Activated naive CD4-positive, alpha-beta T cell treated with anti-CD3 and anti-CD28 coated beads for 36 hours (primary cell): ENCODE measurements at regions of chrX and their contacts with region 1.

Region 1: GRCh38 chrX:153794018-153794896 is at the starts of genes IDH3G and SSR4:
- DNase-seq: peak; percentile 94
- H3K4me3 Mint-ChIP-seq: peak within 1 kb of the TSS; percentile 94
- H3K27ac Mint-ChIP-seq: peak within 1 kb of the TSS; percentile 87
- H3K4me1 Mint-ChIP-seq: peaks cover 29% of the 10 kb centered on the region
- H3K27me3 Mint-ChIP-seq: no peaks in the 10 kb centered on the region
- total RNA-seq, gene IDH3G: 46.3 to 49.9 TPM
- total RNA-seq, gene SSR4: 148 to 152 TPM

Region 2: DNA sequence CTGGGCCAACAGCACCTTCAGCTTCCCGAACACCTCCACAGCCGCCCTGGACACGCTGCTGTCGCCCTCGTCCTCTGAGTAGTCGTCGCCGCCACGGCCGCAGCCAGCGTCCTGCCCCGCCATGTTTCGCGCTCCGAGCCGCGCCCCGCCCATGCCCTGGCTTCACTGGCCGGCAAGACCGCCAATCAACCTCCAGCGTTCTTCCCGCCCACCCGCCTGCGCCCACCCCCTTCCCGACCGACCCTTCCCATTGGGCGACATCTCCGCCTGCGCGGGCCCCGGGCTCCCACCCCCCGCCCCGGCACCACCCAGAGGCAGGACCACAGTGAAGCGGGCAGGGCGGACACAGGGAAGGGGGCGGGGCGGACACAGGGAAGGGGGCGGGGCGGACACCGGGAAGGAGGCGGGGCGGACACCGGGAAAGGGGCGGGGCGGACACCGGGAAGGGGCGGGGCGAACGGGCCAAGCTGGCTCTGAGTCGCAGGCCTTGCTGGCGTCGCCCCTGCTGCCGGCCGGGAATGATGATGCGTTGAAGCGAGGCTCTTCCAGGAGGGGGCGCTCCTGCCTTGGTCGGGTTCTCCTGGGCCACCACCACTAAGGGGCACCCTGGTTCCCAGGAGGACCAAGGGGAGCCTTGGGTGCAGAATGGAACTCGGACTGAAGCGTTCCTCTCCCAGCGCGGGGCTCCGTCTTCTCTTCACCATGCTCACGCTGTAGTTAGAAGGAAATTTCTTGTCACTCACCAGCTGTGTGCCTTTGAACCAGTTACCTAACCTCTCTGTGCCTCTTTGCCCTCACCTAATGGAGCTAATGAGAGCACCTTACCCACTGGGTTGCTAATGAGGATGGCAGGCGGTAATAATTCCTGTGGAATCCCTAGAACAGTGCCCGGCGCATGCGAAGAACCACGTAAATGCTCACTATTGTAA is 323.6 kb before region 1 on chrX and contains the start of gene HAUS7:
- CTCF ChIA-PET with region 1: no interaction called
- intact Hi-C with region 1: loop called (anchors 1 kb)
- DNase-seq: peak; percentile 93
- H3K4me3 Mint-ChIP-seq: peak within 1 kb of the TSS; percentile 78
- H3K27ac Mint-ChIP-seq: peak within 1 kb of the TSS; percentile 77
- H3K4me1 Mint-ChIP-seq: peaks cover 15% of the 10 kb centered on the region
- H3K27me3 Mint-ChIP-seq: no peaks in the 10 kb centered on the region
- total RNA-seq, gene HAUS7: 63.5 to 68.5 TPM

Region 3: DNA sequence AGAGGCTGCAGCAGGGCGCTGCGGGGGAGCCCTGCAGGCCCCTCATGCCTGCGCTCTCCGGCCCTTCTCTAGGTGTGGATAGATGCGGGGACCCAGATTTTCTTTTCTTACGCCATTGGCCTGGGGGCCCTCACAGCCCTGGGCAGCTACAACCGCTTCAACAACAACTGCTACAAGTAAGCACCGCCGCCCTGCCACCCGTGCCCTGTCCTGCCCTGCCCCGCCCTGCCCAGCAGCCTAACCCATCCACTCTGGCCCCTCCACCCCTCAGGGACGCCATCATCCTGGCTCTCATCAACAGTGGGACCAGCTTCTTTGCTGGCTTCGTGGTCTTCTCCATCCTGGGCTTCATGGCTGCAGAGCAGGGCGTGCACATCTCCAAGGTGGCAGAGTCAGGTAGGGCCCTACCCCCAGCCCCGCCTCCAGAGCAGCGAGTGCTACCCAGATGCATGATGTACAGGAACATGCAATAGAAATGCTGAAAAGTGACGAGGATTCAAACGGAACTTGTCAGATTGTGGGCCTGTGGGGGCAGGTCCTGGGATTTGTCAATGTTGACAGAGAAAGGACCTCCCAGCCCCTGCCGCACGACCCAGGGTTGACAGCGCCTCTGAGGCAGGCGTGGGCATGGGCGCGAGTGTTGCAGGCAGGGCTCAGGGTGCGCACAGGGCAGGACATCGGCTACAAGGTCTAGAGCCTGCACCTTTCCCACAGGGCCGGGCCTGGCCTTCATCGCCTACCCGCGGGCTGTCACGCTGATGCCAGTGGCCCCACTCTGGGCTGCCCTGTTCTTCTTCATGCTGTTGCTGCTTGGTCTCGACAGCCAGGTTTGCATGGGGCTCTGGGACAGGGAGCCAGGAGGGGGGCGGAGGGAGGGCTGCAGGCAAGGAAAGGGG is 100.8 kb before region 1 on chrX:
- CTCF ChIA-PET with region 1: no interaction called
- intact Hi-C with region 1: no loop called
- DNase-seq: no peak
- H3K4me3 Mint-ChIP-seq: no peak overlapping the region
- H3K27ac Mint-ChIP-seq: no peak overlapping the region
- H3K4me1 Mint-ChIP-seq: no peaks in the 10 kb centered on the region
- H3K27me3 Mint-ChIP-seq: peaks cover 2% of the 10 kb centered on the region

Region 4: DNA sequence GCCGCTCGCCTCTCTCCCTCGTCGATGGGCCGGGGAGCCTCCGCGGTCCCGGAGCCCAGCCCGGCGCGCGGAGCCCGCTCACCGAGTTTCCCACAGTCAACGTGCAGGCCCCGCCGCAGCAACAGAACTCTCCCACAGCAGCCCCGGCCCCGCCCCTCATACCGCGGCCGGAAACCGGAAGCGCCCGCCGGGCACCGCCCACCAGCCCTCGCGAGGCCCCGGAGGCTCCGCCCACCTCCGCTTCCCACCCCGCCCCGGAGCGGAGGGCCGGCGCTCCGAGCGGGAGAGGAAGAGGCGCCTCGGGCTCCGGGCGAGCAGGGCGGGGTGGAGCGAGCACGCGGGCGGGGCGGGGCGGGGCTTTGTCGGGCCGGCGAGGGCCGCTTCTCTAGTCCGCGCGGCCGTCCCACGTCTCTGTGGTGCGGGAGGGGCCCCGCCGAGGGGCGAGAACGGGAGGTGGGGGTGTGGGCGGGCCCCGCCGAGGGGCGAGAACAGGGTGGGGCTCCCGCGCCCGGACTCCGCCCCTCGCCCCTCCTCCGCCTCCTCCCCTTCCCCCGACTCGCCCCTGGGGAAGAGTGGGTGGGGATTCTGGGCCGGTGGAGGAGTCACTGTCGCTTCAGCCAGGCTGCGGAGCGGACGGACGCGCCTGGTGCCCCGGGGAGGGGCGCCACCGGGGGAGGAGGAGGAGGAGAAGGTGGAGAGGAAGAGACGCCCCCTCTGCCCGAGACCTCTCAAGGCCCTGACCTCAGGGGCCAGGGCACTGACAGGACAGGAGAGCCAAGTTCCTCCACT is 69.8 kb before region 1 on chrX and contains the starts of genes ABCD1 and BCAP31:
- CTCF ChIA-PET with region 1: no interaction called
- intact Hi-C with region 1: loop called (anchors 1 kb)
- DNase-seq: peak; percentile 88
- H3K4me3 Mint-ChIP-seq: peak within 1 kb of the TSS; percentile 85
- H3K27ac Mint-ChIP-seq: peak within 1 kb of the TSS; percentile 81
- H3K4me1 Mint-ChIP-seq: peaks cover 25% of the 10 kb centered on the region
- H3K27me3 Mint-ChIP-seq: no peaks in the 10 kb centered on the region
- total RNA-seq, gene ABCD1: 2.5 to 3.4 TPM
- total RNA-seq, gene BCAP31: 69.5 to 71.2 TPM

Region 5: GRCh38 chrX:153763989-153764755 is 30.1 kb before region 1 on chrX and contains the start of gene PLXNB3:
- CTCF ChIA-PET with region 1: no interaction called
- intact Hi-C with region 1: loop called (anchors 1 kb)
- DNase-seq: peak; percentile 82
- H3K4me3 Mint-ChIP-seq: no peak within 1 kb of the TSS
- H3K27ac Mint-ChIP-seq: no peak within 1 kb of the TSS
- H3K4me1 Mint-ChIP-seq: peaks cover 6% of the 10 kb centered on the region
- H3K27me3 Mint-ChIP-seq: no peaks in the 10 kb centered on the region
- total RNA-seq, gene PLXNB3: 0.05 to 0.44 TPM

Region 6: DNA sequence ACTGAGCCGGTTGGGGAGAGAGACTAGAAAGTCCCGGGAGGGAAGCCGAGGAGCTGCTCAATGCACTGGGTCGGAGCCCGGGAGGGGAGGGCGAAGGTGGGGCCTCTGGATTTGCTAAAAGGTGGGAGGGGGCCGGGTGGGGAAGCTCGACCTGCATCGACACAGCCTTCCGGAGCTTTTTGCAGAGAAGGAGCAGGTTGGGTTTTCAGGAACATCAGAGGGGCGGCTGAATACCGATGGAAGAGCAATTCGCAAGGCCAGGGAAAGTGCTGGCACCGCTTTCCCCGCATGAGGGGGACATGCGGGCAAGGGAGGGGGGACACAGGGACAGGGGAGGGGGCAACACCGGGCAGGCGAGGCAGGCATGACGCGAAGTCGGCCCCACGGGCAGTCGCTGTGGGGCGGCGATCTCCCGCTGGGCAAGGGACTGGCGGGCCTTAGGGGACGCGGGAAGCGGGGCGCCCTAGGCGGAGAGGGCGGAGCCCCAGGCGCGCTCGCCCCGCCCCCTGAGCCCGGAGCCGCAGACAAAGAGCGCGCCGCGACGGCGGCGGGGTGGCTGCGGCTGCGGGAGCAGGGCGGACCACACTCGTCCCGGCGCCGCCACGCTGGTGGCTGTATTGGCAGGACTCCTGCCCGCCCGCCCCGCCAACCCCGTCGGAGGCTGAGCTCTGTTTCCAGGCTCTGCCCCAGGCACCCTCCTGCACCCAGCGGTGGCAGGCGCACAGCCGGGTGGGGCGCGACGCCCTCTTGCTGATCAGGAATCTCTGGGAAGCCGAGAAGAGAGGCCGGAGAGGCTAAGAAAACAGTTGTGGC is 24.5 kb after region 1 on chrX:
- CTCF ChIA-PET with region 1: no interaction called
- intact Hi-C with region 1: loop called (anchors 2 kb)
- DNase-seq: peak; percentile 42
- H3K4me3 Mint-ChIP-seq: peak overlapping the region; percentile 60
- H3K27ac Mint-ChIP-seq: no peak overlapping the region
- H3K4me1 Mint-ChIP-seq: peaks cover 48% of the 10 kb centered on the region
- H3K27me3 Mint-ChIP-seq: no peaks in the 10 kb centered on the region

Region 7: DNA sequence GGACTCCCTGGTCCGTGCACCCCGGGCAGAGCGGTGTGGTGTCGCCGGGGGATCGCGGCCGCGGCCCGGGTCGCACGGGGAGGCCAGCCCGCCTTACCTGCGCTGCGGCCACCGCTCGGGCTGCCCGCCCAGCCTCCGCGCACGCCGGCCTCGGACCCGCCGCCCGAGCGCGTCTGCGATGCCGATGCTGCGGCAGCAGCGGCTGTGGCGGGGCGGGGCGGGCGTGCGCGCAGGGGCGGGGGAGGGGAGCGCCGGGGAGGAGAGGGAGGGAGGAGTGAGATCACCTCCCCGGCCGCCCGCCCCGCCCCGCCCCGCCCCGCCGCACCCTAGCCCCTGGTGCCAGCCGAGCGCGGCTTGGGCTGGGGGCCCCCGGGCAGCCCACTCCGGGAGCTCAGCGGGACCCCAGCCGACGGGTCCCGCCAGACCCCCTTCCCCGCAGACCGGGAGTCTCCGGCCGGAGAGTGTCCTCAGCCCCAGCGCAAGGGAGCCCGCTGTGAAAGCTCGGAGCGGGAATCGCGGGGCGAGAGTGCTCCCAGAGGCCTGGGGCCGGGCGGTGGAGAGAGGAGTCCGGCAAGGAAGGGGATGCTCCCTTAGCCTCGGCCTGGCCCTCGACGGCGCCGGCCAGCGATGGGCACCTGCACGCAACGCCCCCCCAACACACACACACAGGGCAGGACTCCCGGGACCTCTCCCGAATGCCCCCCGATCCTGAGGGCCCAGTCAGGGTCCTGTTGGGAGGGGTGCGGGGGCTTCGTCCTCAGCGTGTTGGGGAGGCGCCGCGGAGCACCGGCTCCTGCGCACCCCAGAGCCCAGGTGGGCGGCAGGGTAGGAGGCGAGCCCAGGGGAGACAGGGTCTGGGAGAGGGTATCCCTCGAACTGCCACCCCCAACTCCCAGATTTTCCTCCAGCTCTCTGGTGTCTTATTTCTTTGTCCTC is 92.0 kb after region 1 on chrX and contains the start of gene L1CAM:
- CTCF ChIA-PET with region 1: no interaction called
- intact Hi-C with region 1: no loop called
- DNase-seq: peak; percentile 38
- H3K4me3 Mint-ChIP-seq: peak within 1 kb of the TSS; percentile 53
- H3K27ac Mint-ChIP-seq: no peak within 1 kb of the TSS
- H3K4me1 Mint-ChIP-seq: peaks cover 3% of the 10 kb centered on the region
- H3K27me3 Mint-ChIP-seq: peaks cover 8% of the 10 kb centered on the region
- total RNA-seq, gene L1CAM: 0.40 to 0.57 TPM

Region 8: GRCh38 chrX:153927922-153928760 is 133.9 kb after region 1 on chrX:
- CTCF ChIA-PET with region 1: interaction called, 4 read pairs
- intact Hi-C with region 1: loop called (anchors 1 kb)
- DNase-seq: peak; percentile 93
- H3K4me3 Mint-ChIP-seq: peak overlapping the region; percentile 88
- H3K27ac Mint-ChIP-seq: peak overlapping the region; percentile 98
- H3K4me1 Mint-ChIP-seq: peaks cover 28% of the 10 kb centered on the region
- H3K27me3 Mint-ChIP-seq: no peaks in the 10 kb centered on the region